ENCODE measurements at regions of chr12 and their contacts with region 1.

Region 1: GRCh38 chr12:121015825-121016766 is at the start of gene C12orf43:
- H3K4me3 Mint-ChIP-seq: peak within 1 kb of the TSS; percentile 99
- H3K27ac Mint-ChIP-seq: peak within 1 kb of the TSS; percentile 93
- H3K4me1 Mint-ChIP-seq: peaks cover 29% of the 10 kb centered on the region
- H3K27me3 Mint-ChIP-seq: no peaks in the 10 kb centered on the region

Region 2: DNA sequence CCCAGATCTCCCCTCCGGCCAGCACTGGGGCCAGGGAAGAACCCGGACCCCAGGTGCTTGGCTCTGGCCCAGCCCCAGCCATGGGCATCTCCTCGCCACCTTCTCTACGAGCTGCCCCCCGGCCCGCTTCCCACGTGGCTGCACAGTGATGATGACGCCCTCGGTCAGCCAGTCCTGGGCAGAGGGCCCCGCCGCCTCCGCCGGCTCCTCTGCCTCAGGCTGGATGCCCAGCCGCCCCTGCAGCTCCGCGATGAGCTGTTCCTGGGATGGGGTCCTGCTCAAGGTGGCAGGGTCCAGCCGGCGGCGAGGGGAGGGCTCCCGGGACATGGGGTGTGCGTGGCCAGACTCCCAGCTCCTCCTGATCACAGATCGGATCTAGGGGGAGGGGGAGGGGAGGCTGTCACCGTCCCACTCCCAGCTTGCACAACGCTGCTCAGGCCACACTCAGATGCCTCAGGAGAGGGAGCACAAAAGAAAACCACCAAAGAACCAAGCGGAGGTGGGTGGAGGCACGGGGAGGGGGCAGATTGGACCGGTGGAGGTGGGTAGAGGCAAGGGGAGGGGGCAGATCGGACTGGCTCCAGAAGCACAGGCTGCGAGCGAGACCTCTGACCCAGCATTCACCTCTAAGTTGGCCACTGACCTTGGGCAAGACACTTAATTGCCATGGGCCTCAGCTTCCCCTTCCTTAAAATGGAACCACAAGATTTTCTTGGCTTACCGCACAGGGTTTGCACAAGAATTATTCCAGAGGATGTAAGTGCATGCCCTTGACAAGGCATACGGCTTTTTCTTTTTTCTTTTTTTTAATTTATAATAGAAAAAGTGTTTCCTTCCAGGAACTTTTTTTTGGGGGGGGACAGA is 799.1 kb before region 1 on chr12:
- intact Hi-C with region 1: no loop called
- H3K4me3 Mint-ChIP-seq: no peak overlapping the region
- H3K27ac Mint-ChIP-seq: no peak overlapping the region
- H3K4me1 Mint-ChIP-seq: peaks cover 3% of the 10 kb centered on the region
- H3K27me3 Mint-ChIP-seq: no peaks in the 10 kb centered on the region

Region 3: GRCh38 chr12:121038861-121039666 is 23.0 kb after region 1 on chr12 and contains the start of gene OASL:
- intact Hi-C with region 1: loop called (anchors 2 kb)
- H3K4me3 Mint-ChIP-seq: peak within 1 kb of the TSS; percentile 83
- H3K27ac Mint-ChIP-seq: peak within 1 kb of the TSS; percentile 87
- H3K4me1 Mint-ChIP-seq: peaks cover 57% of the 10 kb centered on the region
- H3K27me3 Mint-ChIP-seq: peaks cover 2% of the 10 kb centered on the region